Dorsolateral prefrontal cortex (tissue), 120 donors: ENCODE measurements at regions of chr19 and their contacts with region 1.

Region 1: GRCh38 chr19:54478677-54479266 is 5.7 kb upstream of the CDC42EP5 start:
- DNase-seq: no peak
- H3K4me3 ChIP-seq: no peak overlapping the region
- H3K27ac ChIP-seq: no peak overlapping the region
- H3K27me3 ChIP-seq: peaks cover 0 to under 1% (median 0%) of the 10 kb centered on the region in 45 donors
- CTCF ChIP-seq: peak in 55 of 56 donors; percentile 24 to 68 (median 56)

Region 2: DNA sequence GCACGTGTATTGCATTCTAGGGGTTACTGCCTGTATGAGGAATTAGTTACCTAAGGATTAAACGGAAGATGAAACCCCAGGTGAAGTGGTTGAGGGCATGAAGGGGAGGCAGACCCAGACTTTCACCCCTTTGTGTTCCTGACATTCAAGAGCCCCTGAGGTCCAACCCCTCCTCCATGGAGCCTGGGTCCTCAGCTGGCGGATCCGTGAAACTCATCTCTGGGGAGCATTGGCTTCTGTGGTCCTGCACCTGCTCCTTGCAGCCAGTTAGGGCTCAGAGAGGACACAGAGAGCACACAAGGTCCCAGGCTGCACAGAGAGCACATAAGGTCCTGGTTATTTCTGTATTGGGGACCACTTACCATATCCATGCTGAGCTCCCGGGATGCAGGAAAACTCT is 107.6 kb after region 1 on chr19:
- intact Hi-C with region 1: no loop called
- DNase-seq: no peak
- H3K4me3 ChIP-seq: no peak overlapping the region
- H3K27ac ChIP-seq: no peak overlapping the region
- H3K27me3 ChIP-seq: peaks cover 0 to 27% (median 6%) of the 10 kb centered on the region in 45 donors
- CTCF ChIP-seq: no peak

Region 3: DNA sequence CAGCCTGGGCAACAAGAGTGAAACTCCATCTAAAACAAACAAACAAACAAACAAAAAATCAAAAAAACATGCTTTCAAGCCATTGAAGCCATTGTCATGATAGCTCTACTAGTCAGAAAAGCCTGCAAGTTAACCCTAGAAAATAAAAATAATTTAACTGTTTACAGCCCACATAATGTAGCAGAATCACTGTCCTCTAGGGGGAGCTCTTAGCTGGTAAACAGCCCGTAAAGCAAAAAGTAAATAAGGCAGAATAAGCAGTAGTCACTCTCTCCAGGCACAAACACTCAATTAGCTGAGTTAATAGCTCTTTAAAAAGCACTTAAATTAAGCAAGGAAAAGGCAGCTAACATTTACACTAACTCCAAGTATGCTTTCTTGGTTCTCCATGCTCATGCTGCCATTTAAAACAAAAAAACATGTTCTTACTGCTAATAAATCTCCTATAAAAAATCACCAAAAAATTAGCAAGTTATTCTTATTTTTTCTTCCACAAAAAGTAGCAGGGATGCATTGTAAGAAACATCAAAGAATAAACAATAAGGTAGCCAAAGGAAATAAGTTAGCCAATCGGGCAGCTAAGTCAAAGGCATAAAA is 195.3 kb after region 1 on chr19:
- intact Hi-C with region 1: loop called (anchors 10 kb)
- DNase-seq: no peak
- H3K4me3 ChIP-seq: no peak overlapping the region
- H3K27ac ChIP-seq: no peak overlapping the region
- H3K27me3 ChIP-seq: peaks cover 0 to 22% (median 7%) of the 10 kb centered on the region in 45 donors
- CTCF ChIP-seq: peak; percentile 8 to 65 (median 50)